ENCODE measurements at regions of chr10 and their contacts with region 1.

Region 1: DNA sequence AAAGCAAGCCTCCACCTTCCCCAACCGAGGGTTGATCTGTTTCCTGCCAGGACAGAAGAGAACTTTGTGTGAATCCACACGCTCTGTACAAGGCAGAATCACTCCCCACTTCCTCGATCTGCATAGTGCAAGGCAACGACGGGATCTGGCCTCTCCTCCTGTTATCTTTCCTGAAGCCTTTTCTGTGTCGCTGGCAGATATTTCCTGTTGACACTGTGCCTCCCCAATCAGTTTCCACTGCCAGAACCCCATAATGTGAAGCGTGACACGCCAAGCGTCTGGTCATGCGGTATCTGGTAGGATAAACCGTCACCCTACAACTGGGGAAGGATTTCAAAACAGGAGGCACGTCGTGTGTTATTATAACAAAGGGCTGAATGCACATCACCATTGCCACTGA is 57.2 kb downstream of the FAM171A1 start:
- DNase-seq: peak; percentile 28 to 78 (median 63)
- H3K4me3 ChIP-seq: peak overlapping the region in 47 of 59 donors; percentile 1 to 57 (median 28)
- H3K27ac ChIP-seq: peak overlapping the region; percentile 76 to 99 (median 93)
- H3K27me3 ChIP-seq: no peaks in the 10 kb centered on the region
- CTCF ChIP-seq: peak in 2 of 56 donors; percentile 9 to 17

Region 2: GRCh38 chr10:15068802-15069201 is 245.0 kb before region 1 on chr10:
- intact Hi-C with region 1: no loop called
- DNase-seq: no peak
- H3K4me3 ChIP-seq: no peak overlapping the region
- H3K27ac ChIP-seq: no peak overlapping the region
- H3K27me3 ChIP-seq: no peaks in the 10 kb centered on the region
- CTCF ChIP-seq: no peak

Region 3: DNA sequence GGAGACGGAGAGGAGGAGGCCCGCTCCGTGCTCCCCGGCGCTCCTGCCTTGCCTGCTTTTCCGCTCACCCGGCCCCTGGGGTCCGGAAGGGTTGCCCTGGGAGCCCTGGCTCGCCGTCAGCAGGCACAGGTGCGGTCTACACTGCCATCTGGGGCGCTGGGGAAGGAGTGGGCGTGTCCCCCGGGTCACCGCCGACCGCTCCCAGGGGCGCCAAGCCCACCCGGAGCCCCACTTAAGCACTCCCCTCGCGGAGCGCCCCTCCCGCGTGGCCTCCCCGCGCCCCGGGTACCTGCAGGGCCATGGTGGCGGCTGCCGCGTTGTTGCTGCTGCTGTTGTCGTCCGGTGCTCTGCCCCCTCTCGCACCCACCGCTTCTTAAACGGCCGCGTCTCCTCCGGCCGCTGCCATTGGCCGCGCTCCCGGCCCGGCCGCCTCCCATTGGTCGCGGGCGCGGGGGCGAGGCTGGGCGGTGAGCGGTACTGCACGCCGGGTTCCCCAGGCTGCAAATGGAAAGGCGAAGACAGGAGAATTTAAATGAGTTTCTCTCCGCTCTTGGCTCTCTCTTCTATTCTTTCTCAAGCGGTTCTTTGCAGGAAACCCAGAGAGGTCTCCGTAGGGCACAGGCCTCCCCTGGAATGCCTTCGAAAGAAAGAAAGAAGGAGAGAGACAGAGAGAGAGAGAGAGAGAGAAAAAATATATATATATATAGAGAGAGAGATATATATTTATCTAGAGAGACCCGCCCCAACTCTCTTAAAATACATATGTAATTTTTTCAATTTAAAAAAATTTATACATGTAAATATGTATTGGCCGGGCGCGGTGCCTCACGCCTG is 225.2 kb before region 1 on chr10 and contains the start of gene ACBD7:
- intact Hi-C with region 1: no loop called
- DNase-seq: peak; percentile 55 to 89 (median 76)
- H3K4me3 ChIP-seq: peak within 1 kb of the TSS; percentile 51 to 94 (median 73)
- H3K27ac ChIP-seq: peak within 1 kb of the TSS in 38 of 59 donors; percentile 7 to 88 (median 52)
- H3K27me3 ChIP-seq: no peaks in the 10 kb centered on the region
- CTCF ChIP-seq: peak in 49 of 56 donors; percentile 17 to 63 (median 48)
- total RNA-seq, gene ACBD7: 19.5 to 147 (median 53.8) TPM

Region 4: DNA sequence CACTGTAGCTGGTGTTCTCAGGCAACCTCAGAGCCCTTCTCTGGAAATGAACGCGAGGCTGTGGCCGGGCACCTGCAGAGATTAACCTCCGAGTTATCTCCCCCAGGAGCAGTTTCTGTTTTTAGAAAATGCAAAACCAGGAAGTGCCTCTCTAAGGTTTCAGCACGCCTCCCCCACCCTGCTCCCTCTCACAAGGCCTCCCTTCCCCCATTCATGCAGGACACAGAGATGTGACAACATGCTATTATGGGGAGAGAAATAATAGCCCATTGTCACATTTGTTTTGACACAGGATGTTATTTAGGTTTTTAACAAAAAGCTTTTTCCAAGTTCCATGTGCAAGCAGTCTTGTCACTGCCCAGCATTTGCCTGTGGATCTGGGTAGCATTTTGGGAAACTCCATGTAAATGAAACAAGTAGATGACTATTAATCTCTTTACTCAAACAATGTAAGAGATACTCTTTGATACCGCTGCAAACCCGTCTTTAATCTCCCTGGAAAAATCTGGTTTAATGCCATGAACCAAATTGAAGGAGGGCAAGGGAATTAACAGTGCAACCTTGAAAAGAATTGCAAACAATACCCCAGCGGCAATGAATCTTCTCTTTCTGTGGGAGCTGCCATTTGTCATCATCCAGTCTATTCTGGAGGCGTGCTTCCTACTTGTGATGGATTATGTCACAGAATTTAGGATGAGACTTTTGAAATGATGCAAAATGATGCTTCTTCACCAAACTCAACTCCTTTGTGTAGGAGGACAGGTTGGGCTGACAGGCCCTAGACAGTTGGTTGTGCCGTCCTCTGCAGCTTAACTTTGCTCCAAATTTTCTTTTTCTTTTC is 58.8 kb before region 1 on chr10:
- intact Hi-C with region 1: loop called (anchors 5 kb)
- DNase-seq: peak in 5 of 10 donors; percentile 43 to 76 (median 49)
- H3K4me3 ChIP-seq: peak overlapping the region; percentile 4 to 75 (median 52)
- H3K27ac ChIP-seq: peak overlapping the region; percentile 48 to 95 (median 88)
- H3K27me3 ChIP-seq: no peaks in the 10 kb centered on the region
- CTCF ChIP-seq: peak in 6 of 56 donors; percentile 11 to 22 (median 14)

Region 5: GRCh38 chr10:15262036-15262713 is 51.7 kb before region 1 on chr10:
- intact Hi-C with region 1: loop called in 1 of 2 experiments (anchors 5 kb)
- DNase-seq: no peak
- H3K4me3 ChIP-seq: no peak overlapping the region
- H3K27ac ChIP-seq: peak overlapping the region in 8 of 59 donors; percentile 5 to 41 (median 18)
- H3K27me3 ChIP-seq: no peaks in the 10 kb centered on the region
- CTCF ChIP-seq: peak in 55 of 56 donors; percentile 21 to 73 (median 51)

Region 6: GRCh38 chr10:15344876-15345285 is 31.0 kb after region 1 on chr10:
- intact Hi-C with region 1: loop called in 1 of 2 experiments (anchors 5 kb)
- DNase-seq: peak in 2 of 10 donors; percentile 43 to 63
- H3K4me3 ChIP-seq: peak overlapping the region in 34 of 59 donors; percentile 0 to 54 (median 29)
- H3K27ac ChIP-seq: peak overlapping the region; percentile 53 to 95 (median 85)
- H3K27me3 ChIP-seq: no peaks in the 10 kb centered on the region
- CTCF ChIP-seq: peak in 2 of 56 donors; percentile 6 to 21

Region 7: DNA sequence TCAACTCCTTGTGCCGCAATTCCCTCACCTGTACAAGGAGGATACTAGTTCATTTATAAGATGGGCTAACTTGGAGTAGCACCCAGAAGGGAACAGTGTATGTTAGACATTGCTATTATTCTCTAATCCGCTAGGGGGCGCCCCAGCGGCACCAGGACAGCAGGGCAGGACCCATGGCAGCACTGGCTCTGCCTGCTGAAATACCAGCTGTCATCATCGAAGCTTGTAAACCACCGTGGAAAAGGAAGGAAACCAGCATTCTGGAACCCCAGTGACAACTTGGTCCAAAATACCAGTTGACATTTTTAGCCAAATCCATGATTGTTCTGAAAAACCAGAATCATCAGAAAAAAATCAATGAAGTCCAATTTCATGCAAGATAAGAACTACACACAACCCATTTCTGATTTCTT is 271.5 kb after region 1 on chr10:
- intact Hi-C with region 1: no loop called
- DNase-seq: peak in 9 of 10 donors; percentile 4 to 67 (median 46)
- H3K4me3 ChIP-seq: no peak overlapping the region
- H3K27ac ChIP-seq: no peak overlapping the region
- H3K27me3 ChIP-seq: no peaks in the 10 kb centered on the region
- CTCF ChIP-seq: peak; percentile 40 to 84 (median 70)